Endothelial cell of umbilical vein (primary cell): ENCODE measurements at regions of chr2 and their contacts with region 1.

Region 1: GRCh38 chr2:42568401-42569115 is at the start of gene MTA3:
- DNase-seq: peak; percentile 37
- H3K4me3 ChIP-seq: peak within 1 kb of the TSS; percentile 57 to 95 (median 75)
- H3K27ac ChIP-seq: peak within 1 kb of the TSS; percentile 42
- H3K4me1 ChIP-seq: peaks cover 9% of the 10 kb centered on the region
- H3K27me3 ChIP-seq: no peaks in the 10 kb centered on the region
- CTCF ChIP-seq: no peak
- POLR2A ChIP-seq: no peak
- total RNA-seq, gene MTA3: 49.9 and 53.3 TPM in 2 replicates

Region 2: DNA sequence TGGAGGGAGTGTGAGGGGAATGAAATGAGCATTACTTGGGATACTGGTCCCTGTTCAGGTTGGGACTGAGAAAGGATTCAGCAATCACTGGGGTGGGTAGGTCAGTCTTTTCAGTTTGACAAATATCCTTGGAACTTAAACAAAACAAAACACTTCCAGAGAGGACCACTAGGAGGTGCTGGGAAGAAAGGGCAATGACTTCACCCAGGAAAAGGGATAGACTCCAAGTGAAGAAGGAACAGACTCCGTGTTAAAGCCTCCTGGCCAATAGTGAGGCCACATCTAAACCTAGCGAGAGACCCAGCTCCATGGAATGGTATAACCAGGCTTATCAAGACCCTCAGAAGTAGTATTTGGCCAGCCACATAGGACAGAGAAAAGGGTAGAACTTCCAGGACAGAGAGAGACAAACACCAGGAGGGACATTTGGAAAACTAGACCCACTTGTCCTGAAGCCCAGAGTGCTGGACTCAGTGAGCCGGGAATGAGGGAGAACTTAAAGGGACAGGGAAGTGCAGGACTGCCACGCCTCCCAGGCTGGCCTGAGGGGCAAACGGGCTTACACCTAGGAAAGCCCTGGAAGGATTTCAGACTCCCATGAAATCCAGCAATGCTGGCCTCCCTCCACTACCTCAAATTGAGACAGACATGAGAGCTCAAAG is 55.2 kb before region 1 on chr2:
- CTCF ChIA-PET with region 1: interaction called, 5 read pairs
- POLR2A ChIA-PET with region 1: no interaction called
- dilution Hi-C with region 1: no loop called
- intact Hi-C with region 1: loop called (anchors 2 kb)
- DNase-seq: peak; percentile 49
- H3K4me3 ChIP-seq: no peak overlapping the region
- H3K27ac ChIP-seq: no peak overlapping the region
- H3K4me1 ChIP-seq: peaks cover 7% of the 10 kb centered on the region
- H3K27me3 ChIP-seq: no peaks in the 10 kb centered on the region
- CTCF ChIP-seq: peak; percentile 38 to 58
- POLR2A ChIP-seq: no peak